Dorsolateral prefrontal cortex (tissue), 120 donors: ENCODE measurements at regions of chr1 and their contacts with region 1.

Region 1: GRCh38 chr1:9852410-9853248 is 28.9 kb upstream of the CLSTN1 start:
- DNase-seq: peak in 9 of 10 donors; percentile 54 to 86 (median 76)
- H3K4me3 ChIP-seq: no peak overlapping the region
- H3K27ac ChIP-seq: peak overlapping the region in 58 of 59 donors; percentile 79 to 99 (median 93)
- H3K27me3 ChIP-seq: no peaks in the 10 kb centered on the region
- CTCF ChIP-seq: no peak

Region 2: GRCh38 chr1:9239622-9240401 is 612.8 kb before region 1 on chr1:
- intact Hi-C with region 1: no loop called
- DNase-seq: peak in 1 of 10 donors; percentile 55
- H3K4me3 ChIP-seq: peak overlapping the region in 4 of 59 donors; percentile 4 to 20 (median 8)
- H3K27ac ChIP-seq: peak overlapping the region in 56 of 59 donors; percentile 4 to 91 (median 52)
- H3K27me3 ChIP-seq: no peaks in the 10 kb centered on the region
- CTCF ChIP-seq: no peak

Region 3: GRCh38 chr1:9724706-9725476 is 127.7 kb before region 1 on chr1:
- intact Hi-C with region 1: loop called in 1 of 2 experiments (anchors 5 kb)
- DNase-seq: peak in 4 of 10 donors; percentile 38 to 49 (median 41)
- H3K4me3 ChIP-seq: no peak overlapping the region
- H3K27ac ChIP-seq: peak overlapping the region in 6 of 59 donors; percentile 4 to 34 (median 16)
- H3K27me3 ChIP-seq: no peaks in the 10 kb centered on the region
- CTCF ChIP-seq: peak in 55 of 56 donors; percentile 41 to 88 (median 71)

Region 4: GRCh38 chr1:9985001-9985400 is 132.4 kb after region 1 on chr1:
- intact Hi-C with region 1: no loop called
- DNase-seq: no peak
- H3K4me3 ChIP-seq: no peak overlapping the region
- H3K27ac ChIP-seq: peak overlapping the region in 58 of 59 donors; percentile 20 to 96 (median 88)
- H3K27me3 ChIP-seq: no peaks in the 10 kb centered on the region
- CTCF ChIP-seq: no peak